KBM-7 (cell line): ENCODE measurements at regions of chr18 and their contacts with region 1.

Region 1: DNA sequence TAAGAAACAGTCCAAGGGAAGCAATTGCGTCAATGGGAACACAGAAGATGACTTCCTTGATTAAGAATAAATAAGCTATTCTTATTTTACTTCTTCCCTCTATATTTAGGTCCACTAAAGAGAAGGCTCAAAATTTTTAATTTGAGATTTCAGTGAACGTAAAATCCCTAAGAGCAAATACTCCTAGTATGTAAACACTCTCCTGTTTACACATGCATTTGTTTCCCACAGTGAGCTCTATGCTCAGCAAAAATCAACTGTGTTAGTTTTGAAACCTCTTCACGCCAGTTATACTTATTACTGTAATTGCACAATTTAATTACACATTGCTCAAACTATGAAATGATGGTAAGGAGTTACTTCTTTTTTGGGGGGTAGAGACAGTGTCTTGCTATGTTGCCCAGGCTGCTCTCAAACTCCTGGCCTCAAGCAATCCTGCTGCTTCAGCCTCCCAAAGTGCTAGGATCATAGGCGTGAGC is 8.8 kb downstream of the SLC39A6 start:
- DNase-seq: no peak

Region 2: GRCh38 chr18:34933880-34934708 is 1186.2 kb before region 1 on chr18:
- in situ Hi-C with region 1: no loop called
- DNase-seq: no peak

Region 3: GRCh38 chr18:36265015-36265414 is 144.7 kb after region 1 on chr18:
- in situ Hi-C with region 1: loop called (anchors 25 kb)
- DNase-seq: no peak